ENCODE measurements at regions of chr19 and their contacts with region 1.

Region 1: DNA sequence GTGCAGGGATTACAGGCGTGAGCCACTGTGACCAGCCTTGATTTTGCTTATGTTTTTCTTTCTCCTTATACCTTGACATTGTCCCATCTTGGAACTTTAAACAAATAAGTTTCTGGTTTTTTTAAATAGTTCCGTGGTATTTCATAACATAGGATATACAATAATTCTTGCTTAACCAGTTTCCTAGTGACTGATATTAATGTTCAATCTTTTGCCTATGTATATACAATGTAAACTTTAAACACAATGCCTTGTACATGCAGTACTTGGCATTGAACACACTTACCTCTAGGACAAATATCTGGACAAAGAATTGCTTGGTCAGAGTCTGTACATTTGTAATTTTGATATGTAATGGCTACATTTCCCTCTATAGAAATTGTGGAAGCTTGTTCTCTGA is 24.4 kb upstream of the SPACA4 start:
- DNase-seq: no peak
- ATAC-seq: no peak
- H3K4me3 ChIP-seq: no peak overlapping the region
- H3K27ac ChIP-seq: no peak overlapping the region
- H3K4me1 ChIP-seq: peaks cover 6% of the 10 kb centered on the region
- H3K27me3 ChIP-seq: no peaks in the 10 kb centered on the region
- CTCF ChIP-seq: no peak
- POLR2A ChIP-seq: no peak

Region 2: DNA sequence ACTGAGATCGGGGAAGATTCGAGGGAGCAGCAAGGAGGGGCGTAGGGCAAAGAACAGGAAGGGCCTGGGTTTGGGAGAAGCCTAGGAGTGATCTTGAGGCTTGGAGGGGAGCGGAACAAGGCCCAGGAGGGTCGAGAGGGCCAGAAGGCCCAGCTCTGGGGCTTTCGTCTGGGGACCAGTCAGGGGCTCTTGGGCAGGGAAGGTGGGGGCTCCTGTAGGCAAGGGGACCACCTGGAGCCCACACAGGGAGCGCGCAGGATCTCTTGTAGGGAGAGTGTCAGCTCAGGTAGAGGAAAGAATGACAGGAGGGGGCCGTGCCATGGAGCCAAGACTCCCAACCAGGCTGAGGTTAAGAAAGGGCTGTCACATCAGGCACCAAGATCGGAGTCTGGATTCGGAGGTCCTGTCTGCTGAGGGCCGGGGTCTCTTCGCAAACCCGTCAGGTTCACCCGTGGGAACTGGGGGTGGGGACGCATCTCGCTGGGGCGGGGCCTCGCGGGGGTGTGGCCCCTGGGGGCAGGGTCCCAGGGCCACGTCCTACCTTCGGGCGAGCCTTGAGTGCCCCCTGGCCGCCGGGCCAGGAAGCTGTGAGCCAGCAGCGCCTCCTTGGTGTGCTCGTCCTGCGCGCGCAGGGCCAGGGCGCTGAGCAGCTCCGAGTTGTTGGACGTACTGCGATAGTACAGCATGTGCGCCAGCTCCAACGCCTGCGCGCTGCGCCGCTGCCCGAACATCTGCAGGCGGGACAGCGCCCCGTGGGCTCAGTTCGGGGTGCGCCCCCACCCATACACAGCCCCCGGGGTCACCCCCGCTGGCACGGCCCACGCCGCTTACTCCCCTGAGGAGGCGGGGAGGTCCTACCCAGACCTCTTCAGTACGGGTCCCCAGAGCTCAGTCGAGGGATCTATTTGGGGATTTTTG is 248.4 kb before region 1 on chr19:
- intact Hi-C with region 1: no loop called
- DNase-seq: peak; percentile 92 to 97 (median 96)
- ATAC-seq: peak; percentile 77
- H3K4me3 ChIP-seq: peak overlapping the region in 1 of 2 donors; percentile 4
- H3K27ac ChIP-seq: peak overlapping the region; percentile 68 to 93 (median 88)
- H3K4me1 ChIP-seq: peaks cover 47% of the 10 kb centered on the region
- H3K27me3 ChIP-seq: no peaks in the 10 kb centered on the region
- CTCF ChIP-seq: peak; percentile 66 to 94 (median 88)
- POLR2A ChIP-seq: peak in 2 of 3 donors; percentile 34 to 40

Region 3: DNA sequence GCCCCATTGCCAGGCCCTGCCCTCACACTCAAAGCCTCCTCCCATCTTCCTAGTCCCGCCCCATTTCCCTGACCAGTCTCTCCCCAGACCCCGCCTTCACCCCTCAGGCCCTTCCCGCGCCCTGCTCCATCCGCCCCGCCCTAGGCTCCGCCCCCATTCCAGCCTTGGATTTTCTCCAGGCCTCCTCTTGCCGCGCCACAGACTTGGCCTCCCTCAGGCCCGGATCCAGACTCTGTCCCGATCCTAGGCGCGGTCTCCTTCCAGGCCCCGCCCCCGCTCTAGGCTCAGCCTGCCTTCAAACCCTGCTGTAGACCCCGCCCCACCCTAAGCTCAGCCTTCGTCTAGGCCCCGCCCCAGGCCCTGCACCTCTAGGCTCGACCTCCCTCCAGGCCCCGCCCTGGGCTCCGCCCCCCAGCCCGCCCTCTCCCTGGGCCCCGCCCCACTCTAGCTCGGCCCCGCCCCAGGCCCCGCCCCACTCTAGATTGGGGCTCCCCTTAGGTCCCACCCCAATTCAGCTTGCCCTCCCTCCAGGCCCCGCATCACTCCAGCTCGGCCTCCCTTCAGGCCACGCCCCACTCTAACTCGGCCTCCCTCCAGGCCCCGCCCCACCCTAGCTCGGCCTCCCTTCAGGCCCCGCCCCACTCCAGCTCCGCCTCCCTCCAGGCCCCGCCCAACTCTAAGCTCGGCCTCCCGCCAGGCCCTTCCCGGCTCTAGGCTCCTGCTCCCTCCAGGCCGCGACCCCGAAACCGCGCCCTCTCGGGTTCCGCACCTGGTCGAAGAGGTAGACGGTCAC is 89.0 kb before region 1 on chr19:
- intact Hi-C with region 1: loop called (anchors 5 kb)
- DNase-seq: peak; percentile 96 to 98 (median 98)
- ATAC-seq: peak; percentile 80
- H3K4me3 ChIP-seq: no peak overlapping the region
- H3K27ac ChIP-seq: peak overlapping the region; percentile 45 to 79 (median 68)
- H3K4me1 ChIP-seq: peaks cover 41% of the 10 kb centered on the region
- H3K27me3 ChIP-seq: no peaks in the 10 kb centered on the region
- CTCF ChIP-seq: no peak
- POLR2A ChIP-seq: peak in 2 of 3 donors; percentile 72 to 79

Region 4: GRCh38 chr19:48618916-48619691 is 36.9 kb after region 1 on chr19 and contains the starts of genes RPL18 and SPHK2:
- intact Hi-C with region 1: no loop called
- DNase-seq: peak; percentile 98 to 100 (median 98)
- ATAC-seq: peak; percentile 91
- H3K4me3 ChIP-seq: peak within 1 kb of the TSS; percentile 71 to 81
- H3K27ac ChIP-seq: peak within 1 kb of the TSS; percentile 86 to 94 (median 88)
- H3K4me1 ChIP-seq: peaks cover 50% of the 10 kb centered on the region
- H3K27me3 ChIP-seq: no peaks in the 10 kb centered on the region
- CTCF ChIP-seq: peak in 1 of 7 experiments; percentile 4
- POLR2A ChIP-seq: peak; percentile 85 to 96 (median 92)
- total RNA-seq, gene RPL18: 2,402 to 3,112 TPM
- total RNA-seq, gene SPHK2: 8.3 to 37.6 TPM

Measured in body of pancreas (tissue), 4 donors.